ENCODE measurements at regions of chr16 and their contacts with region 1.

Region 1: DNA sequence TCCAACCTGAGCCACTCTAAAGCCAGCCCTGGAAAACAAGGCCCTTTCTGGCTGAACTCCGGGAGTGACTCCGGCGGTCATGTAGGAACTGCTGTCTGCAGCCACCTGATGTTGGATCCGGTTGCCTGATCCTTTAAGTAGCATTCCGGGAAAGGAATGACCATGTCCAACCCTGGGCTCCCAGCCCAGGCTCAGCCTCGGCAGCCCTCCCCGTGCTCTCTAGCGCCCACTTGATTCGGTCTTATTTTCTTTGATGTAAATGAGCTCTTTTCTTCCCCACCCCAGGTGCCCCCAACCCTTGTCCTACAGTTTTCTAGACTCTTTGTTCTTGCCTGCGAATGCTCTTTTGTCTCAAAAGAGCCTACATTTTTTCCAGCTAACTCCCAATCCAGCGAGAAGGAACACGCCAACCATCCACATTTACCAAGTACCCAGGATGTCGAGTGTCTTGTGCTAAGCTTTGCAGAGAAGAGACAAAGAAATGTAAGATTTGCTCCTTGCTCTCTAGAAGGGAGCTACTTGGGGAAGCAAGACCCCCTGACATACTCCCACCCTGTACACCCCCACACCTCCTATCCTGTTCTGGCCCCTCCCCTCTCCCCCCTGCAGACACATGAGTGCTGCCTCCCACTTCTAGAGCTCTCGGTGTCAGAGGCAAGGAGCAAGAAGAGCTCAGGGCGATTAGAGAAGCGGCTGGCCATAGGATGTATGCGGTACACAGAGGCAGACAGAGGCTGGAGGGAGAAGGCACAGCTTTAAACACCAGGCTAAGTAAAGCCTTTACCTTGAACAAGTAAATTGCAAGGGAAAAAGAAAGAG is 53.8 kb downstream of the COG7 start:
- DNase-seq: no peak
- H3K4me3 ChIP-seq: no peak overlapping the region
- H3K27ac ChIP-seq: no peak overlapping the region
- H3K27me3 ChIP-seq: no peaks in the 10 kb centered on the region
- CTCF ChIP-seq: no peak

Region 2: GRCh38 chr16:23423496-23424049 is 24.4 kb after region 1 on chr16:
- CTCF ChIA-PET with region 1: interaction called, 3 read pairs
- POLR2A ChIA-PET with region 1: interaction called, 10 read pairs
- DNase-seq: peak; percentile 97
- H3K4me3 ChIP-seq: no peak overlapping the region
- H3K27ac ChIP-seq: peak overlapping the region; percentile 93
- H3K27me3 ChIP-seq: no peaks in the 10 kb centered on the region
- CTCF ChIP-seq: no peak